SK-N-SH (cell line): ENCODE measurements at regions of chr1 and their contacts with region 1.

Region 1: GRCh38 chr1:64242895-64243756 is 39.7 kb downstream of the UBE2U start:
- DNase-seq: peak; percentile 41
- H3K4me3 ChIP-seq: 0 out of 4 replicates have a peak overlapping the region, but pooled peaks of 1 of the 2 experiments have one; percentile 1
- H3K27ac ChIP-seq: peak overlapping the region in 1 of 2 experiments; percentile 91; a peak in 2 of 4 replicates
- H3K4me1 ChIP-seq: peaks cover 10 to 22% of the 10 kb centered on the region in 2 experiments; a peak in 3 of 4 replicates
- H3K27me3 ChIP-seq: no peaks in the 10 kb centered on the region
- CTCF ChIP-seq: peak; percentile 72
- EP300 ChIP-seq: no peak
- RAD21 ChIP-seq: peak; percentile 93

Region 2: DNA sequence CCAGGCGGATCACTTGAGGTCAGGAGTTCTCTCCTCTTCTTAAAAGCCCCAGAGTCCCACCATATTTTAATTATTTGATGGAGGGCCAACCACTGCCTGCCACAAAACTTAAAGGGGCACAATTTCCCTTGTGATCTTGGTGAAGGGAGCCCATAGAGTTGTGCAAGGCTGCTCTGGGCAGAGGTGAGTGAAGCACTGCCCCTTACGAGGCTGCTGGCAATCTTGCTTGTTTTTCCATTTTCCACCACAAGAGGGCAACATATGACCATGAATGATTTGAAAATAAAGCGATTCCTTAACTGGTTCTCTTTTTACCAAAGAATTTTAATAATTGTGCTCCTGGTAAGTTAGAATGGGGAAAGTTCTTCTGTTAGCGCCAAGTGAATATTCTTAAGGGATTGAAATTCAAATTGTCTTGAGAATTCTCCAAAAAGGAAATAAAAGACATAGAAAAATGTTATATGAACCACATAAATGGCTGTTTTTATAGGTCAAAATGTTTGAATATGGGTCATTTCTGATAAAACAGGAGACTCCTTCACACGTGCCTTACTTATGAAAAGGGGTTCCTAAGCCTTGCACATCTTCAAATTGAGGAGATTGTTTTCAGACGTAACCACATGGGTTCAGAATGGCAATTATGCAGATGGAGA is 627.2 kb before region 1 on chr1:
- CTCF ChIA-PET with region 1: interaction called, 27 read pairs
- POLR2A ChIA-PET with region 1: no interaction called
- DNase-seq: peak; percentile 55
- H3K4me3 ChIP-seq: no peak overlapping the region
- H3K27ac ChIP-seq: no peak overlapping the region
- H3K4me1 ChIP-seq: peaks cover 0 to 5% of the 10 kb centered on the region in 2 experiments; a peak in 3 of 4 replicates
- H3K27me3 ChIP-seq: no peaks in the 10 kb centered on the region
- CTCF ChIP-seq: peak; percentile 77
- EP300 ChIP-seq: no peak
- RAD21 ChIP-seq: peak; percentile 90

Region 3: GRCh38 chr1:63674238-63674864 is 568.8 kb before region 1 on chr1:
- CTCF ChIA-PET with region 1: interaction called, 71 read pairs
- POLR2A ChIA-PET with region 1: interaction called, 3 read pairs
- DNase-seq: peak; percentile 72
- H3K4me3 ChIP-seq: peak overlapping the region in 1 of 2 experiments; percentile 6; a peak in 1 of 4 replicates
- H3K27ac ChIP-seq: peak overlapping the region in 1 of 2 experiments; percentile 76; a peak in 2 of 4 replicates
- H3K4me1 ChIP-seq: peaks cover 0 to 17% of the 10 kb centered on the region in 2 experiments; a peak in 2 of 4 replicates
- H3K27me3 ChIP-seq: no peaks in the 10 kb centered on the region
- CTCF ChIP-seq: peak; percentile 77
- EP300 ChIP-seq: no peak
- RAD21 ChIP-seq: peak; percentile 89

Region 4: DNA sequence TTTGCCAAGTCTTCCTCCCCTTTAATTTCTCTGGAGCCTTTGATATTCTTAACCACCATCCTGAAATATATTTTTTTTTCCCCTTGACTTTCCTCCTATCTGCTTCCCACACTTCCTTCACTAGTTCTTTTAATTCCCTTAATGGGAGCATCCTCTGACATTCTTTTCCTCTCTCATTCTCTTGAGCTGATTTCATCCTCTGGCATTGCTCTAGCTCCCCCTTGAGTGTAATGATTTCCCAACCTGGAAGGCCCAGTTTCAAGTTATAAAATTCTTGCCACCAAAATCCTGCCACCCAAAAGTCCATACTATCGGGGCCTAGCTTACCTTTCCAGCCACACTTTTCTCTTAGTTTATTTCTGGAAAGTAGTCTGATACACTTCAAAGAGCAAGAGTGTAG is 79.2 kb before region 1 on chr1:
- CTCF ChIA-PET with region 1: interaction called, 13 read pairs
- POLR2A ChIA-PET with region 1: no interaction called
- DNase-seq: peak; percentile 24
- H3K4me3 ChIP-seq: no peak overlapping the region
- H3K27ac ChIP-seq: peak overlapping the region in 1 of 2 experiments; percentile 62; a peak in 2 of 4 replicates
- H3K4me1 ChIP-seq: peaks cover 0 to 11% of the 10 kb centered on the region in 2 experiments; a peak in 2 of 4 replicates
- H3K27me3 ChIP-seq: no peaks in the 10 kb centered on the region
- CTCF ChIP-seq: peak; percentile 69
- EP300 ChIP-seq: no peak
- RAD21 ChIP-seq: peak; percentile 74

Region 5: DNA sequence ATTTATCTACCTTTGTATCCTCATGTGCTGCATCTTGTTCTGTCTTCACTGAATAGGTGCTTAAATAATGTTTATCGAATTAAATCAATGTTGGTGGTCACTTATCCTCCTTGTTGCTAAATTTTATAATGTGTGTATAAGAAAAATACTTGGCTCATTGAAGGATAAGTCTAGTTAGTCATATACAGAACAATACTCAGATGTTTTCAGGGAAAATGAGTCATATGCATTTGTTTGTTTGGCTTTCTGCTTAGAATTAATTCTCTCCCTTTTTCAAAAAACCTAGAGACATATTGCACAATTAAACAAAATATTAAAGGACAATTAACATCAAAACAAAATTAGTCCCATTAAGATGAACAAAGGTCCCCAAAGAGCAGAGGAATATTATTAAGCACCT is 49.3 kb after region 1 on chr1:
- CTCF ChIA-PET with region 1: no interaction called
- POLR2A ChIA-PET with region 1: no interaction called
- DNase-seq: no peak
- H3K4me3 ChIP-seq: no peak overlapping the region
- H3K27ac ChIP-seq: no peak overlapping the region
- H3K4me1 ChIP-seq: no peaks in the 10 kb centered on the region; a peak in 1 of 4 replicates
- H3K27me3 ChIP-seq: no peaks in the 10 kb centered on the region
- CTCF ChIP-seq: no peak
- EP300 ChIP-seq: no peak
- RAD21 ChIP-seq: no peak

Region 6: DNA sequence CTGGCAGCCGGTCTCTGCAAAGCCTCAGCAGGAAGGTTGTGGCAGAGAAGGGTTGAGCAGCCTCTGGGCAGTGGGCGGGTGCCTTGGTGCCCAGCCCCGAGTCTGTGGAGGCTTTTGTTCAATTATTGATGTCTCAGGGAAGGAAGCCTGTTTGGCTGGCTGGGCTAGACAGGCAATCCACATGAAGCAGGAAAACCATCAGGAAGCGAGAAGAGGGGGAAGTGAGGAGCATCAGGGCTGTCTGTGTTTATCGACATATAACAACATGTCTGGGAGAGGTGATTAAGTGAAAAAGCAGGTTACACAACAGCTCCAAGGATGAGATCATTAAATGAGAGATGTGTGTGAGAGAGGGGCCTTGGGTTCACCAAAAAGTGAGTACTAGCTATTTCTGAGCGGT is 65.7 kb after region 1 on chr1:
- CTCF ChIA-PET with region 1: no interaction called
- POLR2A ChIA-PET with region 1: no interaction called
- DNase-seq: no peak
- H3K4me3 ChIP-seq: no peak overlapping the region
- H3K27ac ChIP-seq: no peak overlapping the region
- H3K4me1 ChIP-seq: no peaks in the 10 kb centered on the region; a peak in 1 of 4 replicates
- H3K27me3 ChIP-seq: no peaks in the 10 kb centered on the region
- CTCF ChIP-seq: no peak
- EP300 ChIP-seq: no peak
- RAD21 ChIP-seq: no peak

Region 7: GRCh38 chr1:64396817-64397216 is 153.7 kb after region 1 on chr1:
- CTCF ChIA-PET with region 1: no interaction called
- POLR2A ChIA-PET with region 1: no interaction called
- DNase-seq: no peak
- H3K4me3 ChIP-seq: no peak overlapping the region
- H3K27ac ChIP-seq: no peak overlapping the region
- H3K4me1 ChIP-seq: no peaks in the 10 kb centered on the region
- H3K27me3 ChIP-seq: no peaks in the 10 kb centered on the region; the same call in 1 of the 2 replicates
- CTCF ChIP-seq: no peak; the same call in 1 of the 2 replicates
- EP300 ChIP-seq: no peak
- RAD21 ChIP-seq: no peak

Region 8: DNA sequence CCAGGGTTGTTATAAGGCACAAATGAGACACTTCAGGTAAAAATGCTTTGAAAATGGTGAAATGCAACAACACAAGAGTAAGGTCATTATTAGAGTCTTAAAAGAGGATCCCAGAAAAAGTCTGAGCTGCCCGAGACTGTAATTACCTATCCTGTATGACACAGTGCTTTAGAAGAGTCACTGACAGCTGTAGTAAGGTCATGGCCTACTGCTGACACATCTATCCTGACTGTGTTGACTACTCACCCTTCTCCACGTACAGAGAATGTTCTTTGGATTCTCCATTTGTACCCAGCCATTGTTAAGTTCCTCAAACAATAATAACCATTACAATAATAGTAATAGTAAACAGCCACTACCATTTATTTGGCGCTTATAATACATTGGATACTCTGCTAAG is 331.2 kb after region 1 on chr1:
- CTCF ChIA-PET with region 1: no interaction called
- POLR2A ChIA-PET with region 1: no interaction called
- DNase-seq: no peak
- H3K4me3 ChIP-seq: no peak overlapping the region
- H3K27ac ChIP-seq: no peak overlapping the region
- H3K4me1 ChIP-seq: peaks cover 5 to 6% of the 10 kb centered on the region in 2 experiments; a peak in 3 of 4 replicates
- H3K27me3 ChIP-seq: no peaks in the 10 kb centered on the region
- CTCF ChIP-seq: no peak
- EP300 ChIP-seq: no peak
- RAD21 ChIP-seq: no peak